Head of caudate nucleus (tissue), 42 donors: ENCODE measurements at regions of chr17 and their contacts with region 1.

Region 1: DNA sequence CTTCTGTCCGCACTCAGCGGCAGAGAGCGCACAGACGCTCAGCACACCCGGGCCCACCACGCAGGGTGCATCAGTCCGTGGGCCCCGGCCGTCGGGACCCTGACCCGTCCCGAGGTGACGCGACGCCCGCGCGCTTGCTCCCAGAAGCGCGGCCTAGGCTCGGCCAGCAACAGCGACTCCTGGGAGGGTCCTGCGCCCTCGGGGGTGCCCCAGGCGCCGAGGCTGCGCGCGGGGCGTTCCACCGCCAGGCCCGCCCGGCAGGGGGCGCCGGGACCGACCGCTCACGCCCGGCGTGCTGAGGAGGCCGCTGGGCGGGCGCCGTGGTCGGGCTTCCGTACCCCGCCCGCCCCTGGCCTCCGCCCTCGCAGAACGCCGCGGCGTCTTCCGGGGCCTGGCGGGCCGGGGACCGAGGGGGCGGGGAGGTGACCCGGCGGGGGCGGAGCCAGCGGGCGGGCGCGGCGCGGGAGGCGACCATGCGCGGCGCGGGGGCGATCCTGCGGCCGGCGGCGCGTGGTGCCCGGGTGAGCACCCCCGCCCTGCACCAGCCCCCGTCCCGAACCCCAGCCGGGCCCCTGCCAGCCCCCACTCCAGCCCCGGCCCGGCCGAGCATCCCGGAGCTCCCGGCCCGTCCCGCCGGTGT is at the start of gene CISD3:
- DNase-seq: peak in 41 of 42 donors; percentile 25 to 92 (median 83)

Region 2: GRCh38 chr17:38557836-38558727 is 171.9 kb before region 1 on chr17:
- intact Hi-C with region 1: loop called (anchors 10 kb)
- DNase-seq: peak; percentile 83 to 97 (median 92)

Region 3: DNA sequence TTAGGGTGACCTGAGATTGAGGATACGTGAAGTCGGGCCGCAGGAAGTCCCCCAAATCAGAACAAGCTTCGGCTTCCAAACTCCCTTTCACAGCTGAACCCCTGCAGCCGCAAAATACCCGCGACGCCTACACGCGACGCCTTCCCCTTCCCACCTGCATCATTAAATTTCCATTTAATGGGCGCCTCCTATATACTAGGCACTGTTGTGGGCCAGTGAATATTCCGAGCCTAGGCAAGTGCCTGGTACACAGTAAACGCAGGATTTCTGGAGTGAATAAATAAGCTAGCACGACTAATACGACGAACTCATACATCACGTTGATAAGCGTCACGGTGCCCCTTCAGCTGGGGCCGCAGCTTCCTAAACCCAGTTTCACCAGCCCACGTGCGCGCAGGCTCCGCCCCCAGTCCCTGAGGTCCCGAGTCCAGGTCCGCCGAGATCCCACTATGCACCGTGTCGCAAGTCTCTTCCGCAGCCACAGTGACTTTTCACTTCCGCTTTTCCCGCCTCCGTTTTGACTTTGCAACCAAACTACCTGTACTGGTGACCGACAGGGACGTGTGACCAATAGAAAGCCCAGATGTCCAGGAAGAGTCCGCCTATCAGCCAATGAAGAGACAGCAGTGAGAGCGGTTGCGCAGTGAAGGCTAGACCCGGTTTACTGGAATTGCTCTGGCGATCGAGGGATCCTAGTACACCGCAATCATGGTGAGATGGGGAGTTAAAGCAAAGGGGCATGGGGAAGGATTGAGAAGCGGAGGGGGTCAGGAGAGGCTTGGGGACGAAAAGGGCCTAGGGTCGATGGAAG is 22.3 kb after region 1 on chr17 and contains the start of gene PSMB3:
- intact Hi-C with region 1: no loop called
- DNase-seq: peak; percentile 93 to 100 (median 99)